PC-3 (cell line): ENCODE measurements at regions of chr19 and their contacts with region 1.

Region 1: GRCh38 chr19:46346821-46347571 is at the start of gene PPP5C:
- DNase-seq: peak; percentile 87
- ATAC-seq: peak; percentile 84
- H3K4me3 ChIP-seq: peak within 1 kb of the TSS; percentile 97
- H3K27ac ChIP-seq: peak within 1 kb of the TSS; percentile 49
- H3K4me1 ChIP-seq: peaks cover 12% of the 10 kb centered on the region; the same call in 1 of the 2 replicates
- H3K27me3 ChIP-seq: no peaks in the 10 kb centered on the region
- CTCF ChIP-seq: peak; percentile 94
- total RNA-seq, gene PPP5C: 79.9 and 93.4 TPM in 2 replicates

Region 2: GRCh38 chr19:44954824-44955586 is 1392.0 kb before region 1 on chr19 and contains the start of gene CLPTM1:
- CTCF ChIA-PET with region 1: no interaction called
- POLR2A ChIA-PET with region 1: no interaction called
- intact Hi-C with region 1: no loop called
- DNase-seq: peak; percentile 90
- ATAC-seq: peak; percentile 91
- H3K4me3 ChIP-seq: peak within 1 kb of the TSS; percentile 95
- H3K27ac ChIP-seq: peak within 1 kb of the TSS; percentile 92
- H3K4me1 ChIP-seq: peaks cover 11% of the 10 kb centered on the region; the same call in 1 of the 2 replicates
- H3K27me3 ChIP-seq: no peaks in the 10 kb centered on the region
- CTCF ChIP-seq: no peak
- total RNA-seq, gene CLPTM1: 44.9 and 61.3 TPM in 2 replicates

Region 3: DNA sequence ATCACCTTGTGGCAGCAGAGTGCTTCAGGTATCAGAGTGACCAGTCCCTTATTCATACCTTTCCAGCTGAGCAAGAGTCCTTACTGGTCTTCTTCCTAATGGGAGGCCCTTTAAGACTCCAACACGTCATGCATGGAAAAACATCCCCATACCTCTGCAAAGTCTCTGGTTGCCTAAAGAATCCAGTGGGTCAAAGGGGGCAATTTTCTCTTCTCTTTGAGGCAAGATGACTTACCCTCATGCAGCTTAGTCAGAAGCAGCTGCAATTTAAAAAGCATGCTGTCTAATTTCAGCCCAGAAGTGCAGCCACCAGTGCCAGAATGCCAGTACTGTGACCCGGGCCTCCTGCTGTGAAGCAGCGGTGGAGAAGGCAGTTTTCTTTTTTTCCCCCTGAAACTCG is 18.6 kb after region 1 on chr19:
- CTCF ChIA-PET with region 1: interaction called, 3 read pairs
- POLR2A ChIA-PET with region 1: no interaction called
- intact Hi-C with region 1: loop called (anchors 1 kb)
- DNase-seq: no peak
- ATAC-seq: no peak
- H3K4me3 ChIP-seq: no peak overlapping the region
- H3K27ac ChIP-seq: no peak overlapping the region
- H3K4me1 ChIP-seq: peaks cover 5% of the 10 kb centered on the region
- H3K27me3 ChIP-seq: no peaks in the 10 kb centered on the region
- CTCF ChIP-seq: no peak

Region 4: DNA sequence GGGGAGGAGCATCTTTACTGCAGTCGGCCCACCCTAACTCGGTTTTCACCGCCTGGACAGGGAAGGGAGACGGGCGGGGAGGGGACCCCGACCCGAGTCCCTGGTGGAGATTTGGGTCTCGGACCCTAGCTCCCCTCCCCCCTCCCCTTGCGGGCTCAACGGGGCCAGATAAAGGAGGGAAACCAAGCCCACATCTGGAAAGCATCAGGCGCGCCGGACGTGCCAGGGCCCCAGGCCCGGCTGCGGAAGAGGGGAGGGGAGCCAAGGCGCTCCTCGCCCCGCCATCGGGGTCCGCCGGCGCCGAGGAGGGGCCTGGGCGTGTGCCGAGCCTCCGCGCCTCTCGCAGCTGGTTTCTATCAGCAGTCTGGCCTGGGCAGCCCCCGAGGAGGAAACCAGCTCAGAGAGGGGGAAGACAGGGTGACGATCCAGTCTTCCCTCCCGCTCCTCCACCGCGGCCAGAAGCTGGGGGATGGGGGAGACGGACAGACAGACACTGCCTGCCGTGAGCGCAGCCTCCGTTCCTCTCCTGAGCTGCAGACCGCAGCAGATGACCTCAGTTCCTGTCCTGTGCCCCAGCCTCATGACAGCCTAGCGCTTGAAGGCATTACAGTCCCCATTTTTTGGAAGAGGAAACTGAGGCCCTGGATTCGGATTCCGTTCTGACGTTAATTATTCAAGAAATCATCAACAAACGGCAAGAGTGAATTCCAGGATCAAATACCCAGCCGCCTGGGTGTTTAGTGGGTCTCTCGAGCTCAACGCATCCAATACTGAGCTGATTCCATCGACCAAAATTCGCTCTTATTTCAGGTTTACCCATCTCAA is 292.6 kb after region 1 on chr19:
- CTCF ChIA-PET with region 1: interaction called, 14 read pairs
- POLR2A ChIA-PET with region 1: no interaction called
- intact Hi-C with region 1: no loop called
- DNase-seq: no peak
- ATAC-seq: peak; percentile 18; the same call in 1 of the 2 replicates
- H3K4me3 ChIP-seq: peak overlapping the region; percentile 75
- H3K27ac ChIP-seq: no peak overlapping the region
- H3K4me1 ChIP-seq: peaks cover 9% of the 10 kb centered on the region; the same call in 1 of the 2 replicates
- H3K27me3 ChIP-seq: no peaks in the 10 kb centered on the region
- CTCF ChIP-seq: no peak